CD14-positive monocyte (primary cell): ENCODE measurements at regions of chr1 and their contacts with region 1.

Region 1: DNA sequence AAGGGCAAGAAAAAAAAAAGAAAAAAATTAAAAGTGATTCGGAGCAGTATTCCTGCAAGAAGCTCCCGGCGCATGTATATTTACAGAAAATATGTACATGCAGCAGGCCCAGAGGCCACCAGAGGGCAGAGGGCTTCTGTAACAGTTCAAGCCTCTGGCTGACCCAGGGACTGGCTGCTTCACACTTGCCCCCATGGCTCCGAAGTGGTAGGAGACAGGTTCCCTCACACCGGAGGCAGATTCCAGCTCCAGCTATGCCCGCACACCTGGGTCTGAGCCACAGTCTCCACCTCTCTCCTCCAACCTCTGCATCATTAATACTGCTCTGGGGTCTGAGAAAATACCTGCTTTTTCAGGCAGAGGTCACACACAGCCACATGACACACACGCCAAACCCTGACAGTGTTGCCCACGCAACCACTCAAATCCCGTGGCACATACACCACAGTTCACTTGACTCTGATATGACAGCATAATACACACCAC is 2.2 kb upstream of the ARHGAP30 start:
- DNase-seq: peak; percentile 69 to 84 (median 79)
- H3K4me3 ChIP-seq: no peak overlapping the region
- H3K4me3 Mint-ChIP-seq: no peak overlapping the region
- H3K27ac ChIP-seq: no peak overlapping the region
- H3K27ac Mint-ChIP-seq: peak overlapping the region in 6 of 7 donors; percentile 43 to 82 (median 72)
- H3K4me1 ChIP-seq: peaks cover 35 to 38% of the 10 kb centered on the region in 2 donors
- H3K4me1 Mint-ChIP-seq: peaks cover 42% of the 10 kb centered on the region
- H3K27me3 ChIP-seq: no peaks in the 10 kb centered on the region
- H3K27me3 Mint-ChIP-seq: peaks cover 0 to 1% (median under 1%) of the 10 kb centered on the region in 3 donors
- CTCF ChIP-seq: peak; percentile 91

Region 2: DNA sequence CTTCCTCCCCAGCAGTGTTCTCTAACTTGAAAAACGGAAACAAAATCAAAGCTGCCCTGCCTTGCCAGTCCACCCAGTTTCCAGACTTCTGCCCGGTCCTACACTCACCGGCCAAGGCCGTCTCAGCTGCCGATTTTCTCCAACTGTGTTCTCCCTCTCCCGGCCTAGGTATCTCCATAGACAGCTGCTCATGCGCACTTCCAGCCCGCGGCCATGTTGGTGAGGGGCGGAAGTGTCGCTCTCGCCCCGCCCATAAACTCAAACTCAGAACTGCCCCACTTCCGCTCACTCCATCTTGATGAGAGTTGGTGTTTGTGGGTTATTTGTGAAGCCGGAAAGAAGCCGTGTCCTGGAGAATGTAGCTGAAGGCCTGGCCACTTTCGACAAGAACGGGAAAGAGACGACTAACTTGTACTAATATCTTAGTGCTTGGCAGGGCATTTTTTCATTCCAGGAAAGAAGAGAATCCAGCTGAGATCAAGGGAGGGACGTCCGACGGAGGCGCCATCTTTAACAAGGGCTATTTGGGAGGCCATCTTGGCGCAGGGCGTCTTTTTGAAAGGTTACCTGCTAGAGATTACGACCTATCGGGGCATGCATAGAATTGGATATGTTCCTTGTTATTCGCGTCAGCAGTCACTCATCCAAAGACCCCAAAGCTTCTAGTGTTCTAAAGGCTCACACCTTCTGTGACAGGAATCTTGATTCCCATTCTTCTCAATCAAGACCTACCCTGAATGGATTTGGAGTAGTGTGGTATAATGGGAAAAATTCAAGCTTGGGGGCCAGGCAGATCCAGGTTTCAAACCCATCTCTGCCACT is 26.0 kb before region 1 on chr1 and contains the start of gene USF1:
- intact Hi-C with region 1: loop called in 1 of 2 experiments (anchors 2 kb)
- DNase-seq: peak; percentile 95 to 96 (median 96)
- H3K4me3 ChIP-seq: peak within 1 kb of the TSS; percentile 81 to 96 (median 95)
- H3K4me3 Mint-ChIP-seq: peak within 1 kb of the TSS; percentile 99
- H3K27ac ChIP-seq: peak within 1 kb of the TSS; percentile 88 to 99
- H3K27ac Mint-ChIP-seq: peak within 1 kb of the TSS; percentile 99 to 100 (median 100)
- H3K4me1 ChIP-seq: peaks cover 50 to 63% of the 10 kb centered on the region in 2 donors
- H3K4me1 Mint-ChIP-seq: peaks cover 71% of the 10 kb centered on the region
- H3K27me3 ChIP-seq: no peaks in the 10 kb centered on the region
- H3K27me3 Mint-ChIP-seq: no peaks in the 10 kb centered on the region
- CTCF ChIP-seq: no peak
- polyA plus RNA-seq, gene USF1: 6.3 to 335 (median 25.5) TPM

Region 3: GRCh38 chr1:161082991-161083742 is 11.2 kb after region 1 on chr1:
- intact Hi-C with region 1: loop called in 1 of 2 experiments (anchors 1 kb)
- DNase-seq: peak; percentile 98 to 99 (median 99)
- H3K4me3 ChIP-seq: peak overlapping the region in 1 of 3 experiments; percentile 7
- H3K4me3 Mint-ChIP-seq: peak overlapping the region; percentile 35 to 41
- H3K27ac ChIP-seq: peak overlapping the region; percentile 62 to 89
- H3K27ac Mint-ChIP-seq: peak overlapping the region; percentile 90 to 98 (median 96)
- H3K4me1 ChIP-seq: peaks cover 47 to 60% of the 10 kb centered on the region in 2 donors
- H3K4me1 Mint-ChIP-seq: peaks cover 69% of the 10 kb centered on the region
- H3K27me3 ChIP-seq: no peaks in the 10 kb centered on the region
- H3K27me3 Mint-ChIP-seq: peaks cover 0 to 3% (median 1%) of the 10 kb centered on the region in 3 donors
- CTCF ChIP-seq: no peak

Region 4: GRCh38 chr1:161096530-161097313 is 24.8 kb after region 1 on chr1:
- intact Hi-C with region 1: loop called (anchors 2 kb)
- DNase-seq: peak; percentile 53 to 90 (median 76)
- H3K4me3 ChIP-seq: peak overlapping the region in 1 of 3 experiments; percentile 76
- H3K4me3 Mint-ChIP-seq: peak overlapping the region in 1 of 2 donors; percentile 21
- H3K27ac ChIP-seq: no peak overlapping the region
- H3K27ac Mint-ChIP-seq: peak overlapping the region; percentile 65 to 90 (median 81)
- H3K4me1 ChIP-seq: peaks cover 34 to 37% of the 10 kb centered on the region in 2 donors
- H3K4me1 Mint-ChIP-seq: peaks cover 55% of the 10 kb centered on the region
- H3K27me3 ChIP-seq: peaks cover 0 to 7% of the 10 kb centered on the region in 2 donors
- H3K27me3 Mint-ChIP-seq: peaks cover 6 to 22% (median 10%) of the 10 kb centered on the region in 3 donors
- CTCF ChIP-seq: no peak

Region 5: GRCh38 chr1:161117759-161118581 is 46.0 kb after region 1 on chr1 and contains the starts of genes NIT1 and PFDN2:
- intact Hi-C with region 1: loop called in 1 of 2 experiments (anchors 5 kb)
- DNase-seq: peak; percentile 77 to 80 (median 78)
- H3K4me3 ChIP-seq: peak within 1 kb of the TSS; percentile 71 to 100 (median 86)
- H3K4me3 Mint-ChIP-seq: peak within 1 kb of the TSS; percentile 90 to 95
- H3K27ac ChIP-seq: peak within 1 kb of the TSS; percentile 89 to 99
- H3K27ac Mint-ChIP-seq: peak within 1 kb of the TSS; percentile 89 to 98 (median 94)
- H3K4me1 ChIP-seq: peaks cover 72 to 92% of the 10 kb centered on the region in 2 donors
- H3K4me1 Mint-ChIP-seq: peaks cover 90% of the 10 kb centered on the region
- H3K27me3 ChIP-seq: no peaks in the 10 kb centered on the region
- H3K27me3 Mint-ChIP-seq: no peaks in the 10 kb centered on the region
- CTCF ChIP-seq: no peak
- polyA plus RNA-seq, gene NIT1: 28.4 to 84.7 (median 35.7) TPM
- polyA plus RNA-seq, gene PFDN2: 59.1 to 80.7 (median 65.6) TPM

Region 6: GRCh38 chr1:161132410-161133219 is 60.7 kb after region 1 on chr1 and contains the start of gene DEDD:
- intact Hi-C with region 1: loop called in 1 of 2 experiments (anchors 5 kb)
- DNase-seq: peak; percentile 89 to 93 (median 93)
- H3K4me3 ChIP-seq: peak within 1 kb of the TSS; percentile 81 to 98 (median 95)
- H3K4me3 Mint-ChIP-seq: no peak within 1 kb of the TSS
- H3K27ac ChIP-seq: peak within 1 kb of the TSS; percentile 94 to 95
- H3K27ac Mint-ChIP-seq: peak within 1 kb of the TSS in 4 of 7 donors; percentile 84 to 96 (median 89)
- H3K4me1 ChIP-seq: peaks cover 54 to 72% of the 10 kb centered on the region in 2 donors
- H3K4me1 Mint-ChIP-seq: peaks cover 65% of the 10 kb centered on the region
- H3K27me3 ChIP-seq: no peaks in the 10 kb centered on the region
- H3K27me3 Mint-ChIP-seq: peaks cover 0 to 2% (median 0%) of the 10 kb centered on the region in 3 donors
- CTCF ChIP-seq: no peak
- polyA plus RNA-seq, gene DEDD: 40.9 to 56.3 (median 42.2) TPM

Region 7: GRCh38 chr1:161139765-161140164 is 67.8 kb after region 1 on chr1:
- intact Hi-C with region 1: loop called (anchors 2 to 5 kb)
- DNase-seq: peak; percentile 47 to 60 (median 51)
- H3K4me3 ChIP-seq: no peak overlapping the region
- H3K4me3 Mint-ChIP-seq: no peak overlapping the region
- H3K27ac ChIP-seq: peak overlapping the region in 1 of 2 donors; percentile 88
- H3K27ac Mint-ChIP-seq: peak overlapping the region in 5 of 7 donors; percentile 35 to 97 (median 86)
- H3K4me1 ChIP-seq: peaks cover 40 to 42% of the 10 kb centered on the region in 2 donors
- H3K4me1 Mint-ChIP-seq: peaks cover 48% of the 10 kb centered on the region
- H3K27me3 ChIP-seq: no peaks in the 10 kb centered on the region
- H3K27me3 Mint-ChIP-seq: no peaks in the 10 kb centered on the region
- CTCF ChIP-seq: peak; percentile 73